Activated CD4-positive, alpha-beta T cell treated with anti-CD3 and anti-CD28 coated beads for 36 hours (primary cell): ENCODE measurements at regions of chr13 and their contacts with region 1.

Region 1: GRCh38 chr13:42215578-42216421 is 56.2 kb upstream of the AKAP11 start:
- DNase-seq: peak; percentile 50
- ATAC-seq: peak; percentile 57
- H3K4me3 Mint-ChIP-seq: no peak overlapping the region
- H3K27ac Mint-ChIP-seq: no peak overlapping the region
- H3K4me1 Mint-ChIP-seq: peaks cover 2% of the 10 kb centered on the region
- H3K27me3 Mint-ChIP-seq: no peaks in the 10 kb centered on the region

Region 2: GRCh38 chr13:41905600-41906254 is 310.1 kb before region 1 on chr13:
- CTCF ChIA-PET with region 1: no interaction called
- POLR2A ChIA-PET with region 1: no interaction called
- intact Hi-C with region 1: loop called in 1 of 2 experiments (anchors 10 kb)
- DNase-seq: no peak
- ATAC-seq: peak; percentile 78
- H3K4me3 Mint-ChIP-seq: no peak overlapping the region
- H3K27ac Mint-ChIP-seq: peak overlapping the region; percentile 3
- H3K4me1 Mint-ChIP-seq: peaks cover 35% of the 10 kb centered on the region
- H3K27me3 Mint-ChIP-seq: no peaks in the 10 kb centered on the region

Region 3: GRCh38 chr13:42148538-42148937 is 67.3 kb before region 1 on chr13:
- CTCF ChIA-PET with region 1: no interaction called
- POLR2A ChIA-PET with region 1: no interaction called
- intact Hi-C with region 1: no loop called
- DNase-seq: no peak
- ATAC-seq: no peak
- H3K4me3 Mint-ChIP-seq: no peak overlapping the region
- H3K27ac Mint-ChIP-seq: peak overlapping the region; percentile 4
- H3K4me1 Mint-ChIP-seq: peaks cover 20% of the 10 kb centered on the region
- H3K27me3 Mint-ChIP-seq: no peaks in the 10 kb centered on the region

Region 4: GRCh38 chr13:42233710-42234109 is 17.9 kb after region 1 on chr13:
- CTCF ChIA-PET with region 1: no interaction called
- POLR2A ChIA-PET with region 1: no interaction called
- intact Hi-C with region 1: no loop called
- DNase-seq: no peak
- ATAC-seq: no peak
- H3K4me3 Mint-ChIP-seq: no peak overlapping the region
- H3K27ac Mint-ChIP-seq: no peak overlapping the region
- H3K4me1 Mint-ChIP-seq: no peaks in the 10 kb centered on the region
- H3K27me3 Mint-ChIP-seq: no peaks in the 10 kb centered on the region

Region 5: DNA sequence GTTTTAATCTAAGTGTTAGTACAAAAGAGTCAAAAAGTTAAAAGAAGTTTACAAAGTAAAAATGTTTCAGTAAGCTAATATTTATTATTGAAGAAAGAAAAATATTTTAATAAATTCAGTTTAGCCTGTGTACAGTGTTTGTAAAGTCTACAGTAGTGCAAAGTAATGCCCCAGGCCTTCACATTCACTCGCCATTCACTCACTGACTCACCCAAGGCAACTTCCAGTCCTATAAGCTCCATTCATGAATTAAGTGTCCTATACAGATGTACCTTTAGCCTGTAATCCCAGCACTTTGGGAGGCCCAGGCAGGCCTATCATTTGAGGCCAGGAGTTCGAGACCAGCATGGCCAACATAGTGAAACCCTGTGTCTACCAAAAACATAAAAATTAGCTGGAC is 32.1 kb after region 1 on chr13:
- CTCF ChIA-PET with region 1: no interaction called
- POLR2A ChIA-PET with region 1: no interaction called
- intact Hi-C with region 1: no loop called
- DNase-seq: no peak
- ATAC-seq: no peak
- H3K4me3 Mint-ChIP-seq: no peak overlapping the region
- H3K27ac Mint-ChIP-seq: no peak overlapping the region
- H3K4me1 Mint-ChIP-seq: peaks cover 2% of the 10 kb centered on the region
- H3K27me3 Mint-ChIP-seq: no peaks in the 10 kb centered on the region